ENCODE measurements at regions of chr1 and their contacts with region 1.

Region 1: GRCh38 chr1:200262326-200262965 is 147.4 kb downstream of the ZNF281 start:
- DNase-seq: no peak
- ATAC-seq: no peak
- H3K4me3 ChIP-seq: no peak overlapping the region
- H3K27ac ChIP-seq: no peak overlapping the region
- H3K4me1 ChIP-seq: no peaks in the 10 kb centered on the region
- H3K27me3 ChIP-seq: no peaks in the 10 kb centered on the region
- CTCF ChIP-seq: no peak

Region 2: DNA sequence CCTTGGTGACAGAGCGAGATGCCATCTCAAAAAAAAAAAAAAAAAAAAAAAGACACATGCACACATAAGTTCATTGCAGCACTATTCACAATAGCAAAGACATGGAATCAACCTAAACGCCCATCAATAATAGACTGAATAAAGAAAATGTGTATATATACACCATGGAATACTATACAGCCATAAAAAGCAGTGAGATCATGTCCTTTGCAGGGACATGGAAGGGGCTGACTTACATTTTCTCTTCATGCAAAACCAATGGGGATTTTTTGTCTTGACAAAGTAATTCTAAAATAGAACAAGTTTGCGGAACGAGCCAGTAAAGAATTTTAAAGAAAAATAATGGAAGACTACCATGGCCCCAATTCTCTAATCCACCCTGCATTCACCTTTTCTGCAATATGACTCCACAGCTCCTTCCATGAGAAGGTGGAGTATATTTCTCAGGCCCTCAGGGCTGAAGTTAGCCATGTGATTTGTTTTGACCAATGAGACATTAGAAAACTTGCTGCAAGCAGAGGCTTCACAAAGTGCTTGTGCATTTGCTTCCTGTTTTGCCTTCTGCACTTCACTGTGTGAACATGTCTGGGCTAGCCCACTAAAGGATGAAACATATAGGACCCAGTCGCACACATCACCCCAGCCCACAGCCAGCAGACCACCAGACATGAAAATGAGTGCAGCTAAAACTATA is 313.7 kb before region 1 on chr1:
- intact Hi-C with region 1: loop called in 1 of 3 experiments (anchors 10 kb)
- DNase-seq: no peak
- ATAC-seq: no peak
- H3K4me3 ChIP-seq: no peak overlapping the region
- H3K27ac ChIP-seq: no peak overlapping the region
- H3K4me1 ChIP-seq: no peaks in the 10 kb centered on the region
- H3K27me3 ChIP-seq: no peaks in the 10 kb centered on the region
- CTCF ChIP-seq: no peak

Measured in pancreas (tissue), 10 donors.